Gastrocnemius medialis (tissue), 4 donors: ENCODE measurements at regions of chr18 and their contacts with region 1.

Region 1: DNA sequence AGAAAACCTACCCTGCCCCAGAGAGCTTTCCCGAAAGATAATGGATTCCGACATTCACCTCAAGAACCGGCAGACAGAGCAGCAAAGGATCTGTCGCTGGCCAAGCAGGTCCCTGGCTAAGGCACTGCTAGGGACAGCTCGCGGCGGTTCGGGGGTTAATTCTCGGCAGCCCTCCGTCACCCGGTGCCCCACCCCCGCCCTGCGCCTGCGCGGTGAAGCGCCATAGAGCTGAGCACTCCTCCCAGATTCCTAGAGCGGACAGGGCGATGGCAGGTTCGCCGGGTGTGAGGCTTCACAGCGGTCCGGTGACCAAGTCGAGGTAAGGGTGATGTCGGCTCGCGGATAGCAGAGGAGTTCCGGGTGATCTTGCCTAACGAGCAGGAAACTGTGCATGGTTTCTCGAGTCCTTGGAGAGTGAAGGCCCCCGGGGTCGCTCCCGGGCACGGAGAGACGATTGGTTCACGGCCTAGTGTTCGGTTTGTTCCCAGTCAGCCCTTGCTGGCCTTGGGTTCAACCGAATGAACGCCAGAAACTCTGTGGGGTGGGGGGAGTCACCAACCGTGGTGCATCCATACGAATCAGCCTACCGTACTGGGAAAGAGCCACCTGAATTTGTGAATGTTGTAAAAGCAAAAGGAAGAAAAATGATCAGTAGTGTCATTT is at the start of gene ZSCAN30:
- DNase-seq: peak; percentile 88 to 95
- ATAC-seq: peak; percentile 98
- H3K4me3 ChIP-seq: peak within 1 kb of the TSS; percentile 62 to 88 (median 80)
- H3K27ac ChIP-seq: peak within 1 kb of the TSS; percentile 88 to 92 (median 90)
- H3K4me1 ChIP-seq: peaks cover 21 to 30% of the 10 kb centered on the region in 2 donors
- H3K27me3 ChIP-seq: no peaks in the 10 kb centered on the region
- CTCF ChIP-seq: peak in 1 of 5 experiments; percentile 24
- POLR2A ChIP-seq: peak; percentile 51 to 60
- total RNA-seq, gene ZSCAN30: 4.6 to 34.6 (median 8.2) TPM

Region 2: DNA sequence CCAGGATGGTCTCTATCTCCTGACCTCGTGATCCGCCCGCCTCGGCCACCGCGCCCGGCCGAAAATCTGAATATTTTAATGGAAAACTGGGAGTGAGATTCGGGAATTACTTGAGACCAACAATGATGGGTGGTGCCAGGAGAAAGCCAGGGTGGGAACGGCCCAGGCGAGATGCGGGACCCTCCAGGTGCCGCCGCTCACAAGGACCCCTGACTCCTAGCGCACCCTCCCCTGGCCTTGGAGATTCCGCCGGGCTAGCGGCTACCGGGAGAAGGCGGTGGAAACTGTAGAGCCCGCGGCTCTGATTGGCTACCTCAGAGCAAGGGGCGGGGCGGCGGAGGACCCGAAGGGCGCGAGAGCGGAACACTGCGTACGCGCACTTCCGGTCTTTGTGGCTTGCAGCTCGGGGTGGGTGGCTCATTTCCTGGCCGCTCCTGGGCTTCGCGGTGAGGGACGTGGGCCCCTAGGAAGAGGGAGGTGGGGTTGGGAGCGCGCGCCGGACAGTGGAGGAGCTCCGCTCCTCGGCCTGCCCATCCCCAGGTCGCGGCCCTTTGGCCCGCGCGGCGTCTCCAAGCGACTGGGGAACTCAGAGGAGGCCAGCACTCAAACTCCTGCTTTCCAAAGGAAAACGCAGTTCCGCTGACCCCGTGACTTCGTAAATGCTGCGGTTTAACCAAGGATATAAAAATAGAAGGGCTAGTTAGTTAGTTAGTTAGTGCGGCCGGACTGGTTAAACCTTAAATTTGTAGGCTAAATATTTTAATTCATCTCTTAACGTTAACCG is 49.3 kb before region 1 on chr18 and contains the start of gene ZNF397:
- in situ Hi-C with region 1: loop called in 1 of 4 experiments (anchors 5 kb)
- intact Hi-C with region 1: loop called (anchors 1 kb)
- DNase-seq: peak; percentile 96 to 97
- ATAC-seq: peak; percentile 99
- H3K4me3 ChIP-seq: peak within 1 kb of the TSS; percentile 79 to 95 (median 86)
- H3K27ac ChIP-seq: peak within 1 kb of the TSS; percentile 92 to 100 (median 96)
- H3K4me1 ChIP-seq: peaks cover 10 to 15% of the 10 kb centered on the region in 2 donors
- H3K27me3 ChIP-seq: no peaks in the 10 kb centered on the region
- CTCF ChIP-seq: peak in 1 of 5 experiments; percentile 16
- POLR2A ChIP-seq: peak; percentile 95 to 96
- total RNA-seq, gene ZNF397: 12.3 to 23.4 (median 14.7) TPM